CD4-positive, alpha-beta memory T cell (primary cell): ENCODE measurements at regions of chr9 and their contacts with region 1.

Region 1: DNA sequence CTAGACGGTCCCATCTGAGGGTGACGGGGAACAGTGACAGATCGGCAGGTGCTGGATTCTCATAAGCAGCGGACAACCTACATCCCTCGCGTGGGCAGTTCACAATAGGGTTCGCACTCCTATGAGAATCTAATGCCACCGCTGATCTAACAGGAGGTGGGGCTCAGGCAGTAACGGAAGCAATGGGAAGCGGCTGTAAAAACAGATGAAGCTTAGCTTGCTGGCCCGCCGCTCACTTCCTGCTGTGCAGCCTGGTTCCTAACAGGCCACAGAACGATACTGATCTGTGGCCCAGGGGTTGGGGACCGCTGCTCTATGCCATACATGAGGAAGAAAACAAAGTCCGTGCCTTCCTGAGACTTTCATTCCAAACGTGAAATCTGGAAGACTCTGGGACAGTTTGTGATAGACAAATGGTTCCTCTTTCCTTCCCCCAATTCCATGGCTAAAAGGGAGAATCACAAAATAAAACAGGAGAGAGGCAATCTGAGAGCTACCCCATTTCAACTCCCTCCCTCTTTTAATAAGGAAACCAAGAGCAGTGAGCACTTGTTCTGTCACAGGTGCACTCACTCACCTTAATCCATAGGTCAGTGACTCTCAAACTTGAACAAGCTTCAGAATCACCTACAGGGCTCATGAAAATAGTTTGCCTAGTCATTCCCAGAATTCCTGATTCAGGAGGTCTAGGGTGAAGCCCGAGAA is 12.1 kb downstream of the PDCL start:
- DNase-seq: peak; percentile 35 to 66 (median 45)
- H3K4me3 ChIP-seq: peak overlapping the region; percentile 1 to 18
- H3K4me3 Mint-ChIP-seq: peak overlapping the region; percentile 75 to 87 (median 84)
- H3K27ac ChIP-seq: peak overlapping the region; percentile 41
- H3K27ac Mint-ChIP-seq: peak overlapping the region; percentile 90 to 98 (median 94)
- H3K4me1 ChIP-seq: peaks cover 42% of the 10 kb centered on the region
- H3K4me1 Mint-ChIP-seq: peaks cover 29 to 44% (median 35%) of the 10 kb centered on the region in 4 donors
- H3K27me3 ChIP-seq: no peaks in the 10 kb centered on the region
- H3K27me3 Mint-ChIP-seq: no peaks in the 10 kb centered on the region

Region 2: DNA sequence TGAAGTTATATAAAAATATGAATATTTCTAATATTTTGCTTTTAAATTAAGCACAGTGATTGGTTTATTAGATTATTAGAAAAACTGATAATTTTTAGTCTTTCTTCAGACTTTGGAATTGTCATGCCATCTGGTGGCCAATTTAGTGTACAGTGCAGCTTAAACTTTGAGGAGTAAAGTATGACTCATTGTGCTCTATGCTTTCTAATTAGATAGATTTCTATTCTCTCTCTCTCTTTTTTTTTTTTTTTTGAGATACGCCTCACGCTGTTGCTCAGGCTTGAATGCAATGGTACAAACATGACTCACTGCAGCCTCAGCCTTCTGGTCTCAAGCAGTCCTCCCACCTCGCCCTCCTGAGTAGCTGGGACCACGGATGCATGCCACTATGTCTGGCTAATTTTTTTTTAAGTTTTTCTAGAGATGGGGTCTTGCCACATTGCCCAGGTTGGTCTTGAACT is 175.1 kb after region 1 on chr9:
- CTCF ChIA-PET with region 1: no interaction called
- POLR2A ChIA-PET with region 1: no interaction called
- intact Hi-C with region 1: loop called (anchors 5 kb)
- DNase-seq: peak; percentile 25 to 61 (median 32)
- H3K4me3 ChIP-seq: no peak overlapping the region
- H3K4me3 Mint-ChIP-seq: no peak overlapping the region
- H3K27ac ChIP-seq: no peak overlapping the region
- H3K27ac Mint-ChIP-seq: peak overlapping the region in 3 of 7 donors; percentile 29 to 88 (median 29)
- H3K4me1 ChIP-seq: no peaks in the 10 kb centered on the region
- H3K4me1 Mint-ChIP-seq: peaks cover 0 to 3% (median under 1%) of the 10 kb centered on the region in 4 donors
- H3K27me3 ChIP-seq: no peaks in the 10 kb centered on the region
- H3K27me3 Mint-ChIP-seq: no peaks in the 10 kb centered on the region